GM10248 (cell line): ENCODE measurements at regions of chr17 and their contacts with region 1.

Region 1: GRCh38 chr17:60571551-60571950 is 28.4 kb upstream of the PPM1D start:
- DNase-seq: no peak
- CTCF ChIP-seq: no peak

Region 2: GRCh38 chr17:60473788-60474187 is 97.8 kb before region 1 on chr17:
- CTCF ChIA-PET with region 1: no interaction called
- POLR2A ChIA-PET with region 1: no interaction called
- DNase-seq: no peak
- CTCF ChIP-seq: no peak

Region 3: GRCh38 chr17:60539807-60540206 is 31.7 kb before region 1 on chr17:
- CTCF ChIA-PET with region 1: interaction called, 13 read pairs
- POLR2A ChIA-PET with region 1: no interaction called
- DNase-seq: no peak
- CTCF ChIP-seq: no peak

Region 4: DNA sequence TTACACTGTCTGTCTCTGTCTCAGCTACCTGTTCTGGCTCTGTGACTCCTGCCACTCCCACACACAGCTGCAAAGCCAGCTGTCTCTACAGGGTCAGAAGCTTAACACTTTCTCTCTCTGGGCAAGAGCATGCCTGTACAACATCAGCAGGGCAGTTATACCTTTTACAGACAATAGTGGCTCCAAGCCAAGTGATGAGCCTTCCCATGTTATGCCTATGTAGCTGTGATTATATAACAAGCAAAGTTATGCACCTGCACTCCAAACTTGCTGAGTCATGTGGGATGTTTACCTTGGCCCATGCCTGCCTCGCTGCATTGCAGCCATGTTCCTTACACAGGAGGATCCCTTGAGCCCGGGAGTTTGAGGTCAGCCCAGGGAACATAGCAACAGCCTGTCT is 13.7 kb before region 1 on chr17:
- CTCF ChIA-PET with region 1: interaction called, 18 read pairs
- POLR2A ChIA-PET with region 1: no interaction called
- DNase-seq: no peak
- CTCF ChIP-seq: no peak

Region 5: DNA sequence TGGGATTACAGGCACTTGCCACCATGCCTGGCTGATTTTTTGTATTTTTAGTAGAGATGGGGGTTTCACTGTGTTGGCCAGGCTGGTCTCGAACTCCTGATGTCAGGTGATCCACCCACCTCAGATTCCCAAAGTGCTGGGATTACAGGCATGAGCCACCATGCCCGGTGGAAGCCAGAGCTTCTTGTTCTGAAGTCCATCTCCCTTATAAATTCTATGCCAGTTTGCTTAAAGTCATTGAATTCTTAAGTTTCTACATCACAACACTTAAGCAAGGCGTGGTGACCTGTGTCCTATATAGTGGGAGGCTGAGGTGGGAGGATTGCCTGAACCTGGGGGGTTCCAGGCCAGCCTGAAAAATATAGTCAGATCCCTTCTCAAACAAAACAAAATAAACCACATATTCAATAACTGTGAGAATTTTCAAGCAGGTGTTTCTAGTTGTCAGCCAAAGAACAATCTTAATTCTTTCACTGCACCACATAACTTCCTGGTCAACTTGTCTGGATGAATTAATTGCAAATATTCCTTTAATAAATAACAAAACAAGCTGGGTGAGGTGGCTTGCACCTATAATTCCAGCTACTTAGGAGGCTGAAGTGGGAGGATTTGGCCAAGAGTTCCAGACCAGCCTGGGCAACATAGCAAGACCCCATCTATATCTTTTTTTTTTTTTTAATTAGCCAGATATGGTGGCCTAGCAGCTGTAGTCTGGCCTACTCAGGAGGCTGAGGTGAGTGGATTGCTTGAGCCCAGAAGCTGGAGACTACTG is 11.3 kb after region 1 on chr17:
- CTCF ChIA-PET with region 1: interaction called, 20 read pairs
- POLR2A ChIA-PET with region 1: no interaction called
- DNase-seq: no peak
- CTCF ChIP-seq: no peak